ENCODE measurements at regions of chr4 and their contacts with region 1.

Region 1: GRCh38 chr4:56641494-56642051 is 39.5 kb downstream of the HOPX start:
- DNase-seq: no peak
- ATAC-seq: no peak
- H3K4me3 ChIP-seq: no peak overlapping the region
- H3K4me3 Mint-ChIP-seq: no peak overlapping the region
- H3K27ac ChIP-seq: no peak overlapping the region
- H3K27ac Mint-ChIP-seq: no peak overlapping the region
- H3K4me1 ChIP-seq: no peaks in the 10 kb centered on the region
- H3K4me1 Mint-ChIP-seq: peaks cover 11% of the 10 kb centered on the region
- H3K27me3 ChIP-seq: no peaks in the 10 kb centered on the region
- H3K27me3 Mint-ChIP-seq: no peaks in the 10 kb centered on the region
- CTCF ChIP-seq: no peak

Region 2: DNA sequence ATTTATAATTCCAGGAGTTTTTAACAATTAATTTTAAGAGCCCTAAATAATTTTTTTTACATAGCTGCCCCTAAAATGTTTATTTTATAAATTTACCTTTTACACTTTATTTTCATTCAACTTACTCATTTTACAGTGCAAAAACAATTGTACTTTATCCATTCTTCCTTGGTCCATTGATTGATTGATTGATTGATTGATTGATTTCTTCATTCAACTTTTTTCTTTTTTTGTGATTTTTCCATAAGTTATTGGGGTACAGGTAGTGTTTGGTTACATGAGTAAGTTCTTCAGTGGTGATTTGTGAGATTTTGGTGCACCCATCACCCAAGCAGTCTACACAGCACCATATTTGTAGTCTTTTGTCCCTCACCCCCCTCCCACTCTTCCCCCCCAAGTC is 54.5 kb before region 1 on chr4:
- CTCF ChIA-PET with region 1: no interaction called
- POLR2A ChIA-PET with region 1: no interaction called
- intact Hi-C with region 1: loop called in 1 of 2 experiments (anchors 1 kb)
- DNase-seq: no peak
- ATAC-seq: no peak
- H3K4me3 ChIP-seq: no peak overlapping the region
- H3K4me3 Mint-ChIP-seq: no peak overlapping the region
- H3K27ac ChIP-seq: no peak overlapping the region
- H3K27ac Mint-ChIP-seq: no peak overlapping the region
- H3K4me1 ChIP-seq: no peaks in the 10 kb centered on the region
- H3K4me1 Mint-ChIP-seq: no peaks in the 10 kb centered on the region
- H3K27me3 ChIP-seq: no peaks in the 10 kb centered on the region
- H3K27me3 Mint-ChIP-seq: no peaks in the 10 kb centered on the region
- CTCF ChIP-seq: no peak